ENCODE measurements at regions of chr4 and their contacts with region 1.

Region 1: DNA sequence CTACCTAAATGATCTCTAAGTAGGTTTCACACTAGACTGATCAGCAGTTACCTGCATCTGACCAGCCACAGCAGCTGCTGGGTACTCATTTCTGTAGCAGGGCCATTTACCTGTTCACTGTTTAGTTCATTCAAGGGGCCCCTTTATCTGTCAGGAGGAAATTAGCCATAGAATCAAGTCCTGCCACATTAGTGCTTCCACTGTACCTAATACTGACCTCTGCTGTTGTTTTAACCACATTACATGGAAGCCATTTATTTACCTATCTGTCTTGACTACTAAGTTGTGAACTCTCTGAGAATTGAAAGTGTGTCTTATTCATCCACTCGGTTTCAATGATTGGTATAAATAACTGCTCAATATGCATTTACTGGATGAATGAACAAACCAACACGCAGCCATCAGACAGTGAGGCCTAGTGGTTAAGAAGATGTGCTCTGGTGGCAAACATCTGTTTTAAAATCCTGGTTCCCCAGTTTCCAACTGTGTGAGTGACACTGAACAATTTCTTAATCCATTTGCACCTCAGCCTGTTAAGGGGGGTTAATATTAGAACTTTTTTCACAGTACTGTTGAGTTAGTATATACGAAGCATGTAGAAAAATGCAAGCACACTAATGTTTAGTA is 30.0 kb upstream of the ANXA5 start:
- DNase-seq: no peak
- H3K4me3 Mint-ChIP-seq: no peak overlapping the region
- H3K27ac Mint-ChIP-seq: no peak overlapping the region
- H3K4me1 Mint-ChIP-seq: peaks cover 6% of the 10 kb centered on the region
- H3K27me3 Mint-ChIP-seq: peaks cover 10% of the 10 kb centered on the region

Region 2: GRCh38 chr4:121462660-121463261 is 264.0 kb before region 1 on chr4:
- intact Hi-C with region 1: loop called (anchors 1 kb)
- DNase-seq: peak; percentile 31
- H3K4me3 Mint-ChIP-seq: no peak overlapping the region
- H3K27ac Mint-ChIP-seq: no peak overlapping the region
- H3K4me1 Mint-ChIP-seq: peaks cover 4% of the 10 kb centered on the region
- H3K27me3 Mint-ChIP-seq: peaks cover 18% of the 10 kb centered on the region

Region 3: GRCh38 chr4:121484633-121485032 is 242.1 kb before region 1 on chr4:
- intact Hi-C with region 1: loop called (anchors 1 kb)
- DNase-seq: no peak
- H3K4me3 Mint-ChIP-seq: no peak overlapping the region
- H3K27ac Mint-ChIP-seq: no peak overlapping the region
- H3K4me1 Mint-ChIP-seq: no peaks in the 10 kb centered on the region
- H3K27me3 Mint-ChIP-seq: peaks cover 22% of the 10 kb centered on the region

Region 4: DNA sequence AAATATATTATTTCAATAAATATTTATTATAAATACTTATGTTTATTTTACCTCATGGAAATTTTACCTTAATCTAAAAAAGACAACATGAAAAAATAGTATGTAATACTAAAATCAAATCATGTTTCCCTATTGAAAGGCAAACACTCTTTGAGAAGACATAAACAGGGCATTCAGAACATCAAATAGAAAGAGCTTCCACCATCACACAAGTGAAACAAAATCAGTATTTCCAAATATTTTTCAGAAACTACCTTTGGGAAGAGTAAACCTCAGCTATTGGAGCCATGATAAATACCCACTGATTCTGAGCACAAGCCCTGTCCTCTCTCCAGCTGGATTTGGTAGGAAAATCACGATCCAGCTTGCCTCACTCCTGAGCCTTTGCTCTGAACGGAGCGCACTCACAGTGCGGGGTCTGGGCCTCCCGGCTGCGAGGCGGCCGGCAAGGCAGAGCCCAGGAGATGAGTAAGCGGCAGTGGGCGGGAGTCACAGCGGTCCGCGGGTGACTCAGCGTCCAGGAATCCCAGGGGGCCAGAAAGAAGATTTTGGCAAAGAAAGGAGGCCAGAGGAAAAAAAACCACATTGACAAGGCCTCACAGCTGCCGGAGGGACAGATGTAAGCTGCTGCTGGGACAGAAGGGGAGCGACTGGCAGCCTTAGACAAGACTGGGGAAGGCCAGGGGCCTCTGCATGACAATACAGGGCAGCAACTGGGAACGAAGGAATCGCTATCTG is 15.3 kb before region 1 on chr4:
- intact Hi-C with region 1: loop called (anchors 2 kb)
- DNase-seq: peak; percentile 10
- H3K4me3 Mint-ChIP-seq: peak overlapping the region; percentile 45
- H3K27ac Mint-ChIP-seq: no peak overlapping the region
- H3K4me1 Mint-ChIP-seq: peaks cover 51% of the 10 kb centered on the region
- H3K27me3 Mint-ChIP-seq: peaks cover 24% of the 10 kb centered on the region